Naive thymus-derived CD4-positive, alpha-beta T cell (primary cell): ENCODE measurements at regions of chr7 and their contacts with region 1.

Region 1: GRCh38 chr7:47394751-47395252 is 187.1 kb downstream of the TNS3 start:
- DNase-seq: no peak
- ATAC-seq: no peak
- H3K4me3 ChIP-seq: no peak overlapping the region
- H3K4me3 Mint-ChIP-seq: no peak overlapping the region
- H3K27ac ChIP-seq: no peak overlapping the region
- H3K27ac Mint-ChIP-seq: no peak overlapping the region
- H3K4me1 ChIP-seq: no peaks in the 10 kb centered on the region
- H3K4me1 Mint-ChIP-seq: peaks cover 0 to 1% (median 0%) of the 10 kb centered on the region in 7 donors
- H3K27me3 ChIP-seq: no peaks in the 10 kb centered on the region
- H3K27me3 Mint-ChIP-seq: peaks cover 0 to 30% (median 0%) of the 10 kb centered on the region in 5 donors

Region 2: GRCh38 chr7:47338026-47338425 is 56.8 kb before region 1 on chr7:
- CTCF ChIA-PET with region 1: no interaction called
- POLR2A ChIA-PET with region 1: no interaction called
- intact Hi-C with region 1: loop called in 1 of 2 experiments (anchors 2 kb)
- DNase-seq: no peak
- ATAC-seq: no peak
- H3K4me3 ChIP-seq: no peak overlapping the region
- H3K4me3 Mint-ChIP-seq: no peak overlapping the region
- H3K27ac ChIP-seq: no peak overlapping the region
- H3K27ac Mint-ChIP-seq: no peak overlapping the region
- H3K4me1 ChIP-seq: no peaks in the 10 kb centered on the region
- H3K4me1 Mint-ChIP-seq: no peaks in the 10 kb centered on the region
- H3K27me3 ChIP-seq: no peaks in the 10 kb centered on the region
- H3K27me3 Mint-ChIP-seq: no peaks in the 10 kb centered on the region

Region 3: GRCh38 chr7:47379629-47380324 is 15.0 kb before region 1 on chr7:
- CTCF ChIA-PET with region 1: no interaction called
- POLR2A ChIA-PET with region 1: no interaction called
- intact Hi-C with region 1: no loop called
- DNase-seq: no peak
- ATAC-seq: no peak
- H3K4me3 ChIP-seq: no peak overlapping the region
- H3K4me3 Mint-ChIP-seq: no peak overlapping the region
- H3K27ac ChIP-seq: no peak overlapping the region
- H3K27ac Mint-ChIP-seq: no peak overlapping the region
- H3K4me1 ChIP-seq: no peaks in the 10 kb centered on the region
- H3K4me1 Mint-ChIP-seq: no peaks in the 10 kb centered on the region
- H3K27me3 ChIP-seq: no peaks in the 10 kb centered on the region
- H3K27me3 Mint-ChIP-seq: peaks cover 0 to 17% (median 0%) of the 10 kb centered on the region in 5 donors